ENCODE measurements at regions of chr12 and their contacts with region 1.

Region 1: GRCh38 chr12:54398995-54399793 is 14.7 kb upstream of the ZNF385A start:
- DNase-seq: peak; percentile 91

Region 2: DNA sequence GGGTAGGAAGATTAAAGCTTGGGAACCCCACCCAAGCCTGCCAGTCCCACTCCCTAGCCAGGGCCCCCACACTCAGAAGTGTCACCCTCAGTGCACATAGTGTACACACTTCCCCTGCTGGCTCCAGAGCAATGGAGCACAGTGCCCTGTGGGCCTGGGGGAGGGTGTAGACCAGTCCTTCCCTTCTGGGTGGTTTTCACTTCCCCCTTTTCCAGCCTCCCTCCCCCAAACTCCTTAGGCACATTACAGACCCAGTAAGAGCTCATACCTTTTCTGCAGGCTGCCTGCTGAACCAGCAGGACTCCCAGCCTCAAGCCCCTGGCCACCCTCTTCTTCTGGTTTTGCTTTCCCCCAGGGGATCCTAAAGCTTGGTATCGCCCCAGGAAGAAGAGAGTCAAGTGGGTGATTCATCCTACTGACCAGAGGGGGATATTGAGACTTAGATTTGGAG is 14.6 kb before region 1 on chr12 and contains the start of gene ZNF385A:
- intact Hi-C with region 1: loop called (anchors 1 kb)
- DNase-seq: no peak
- total RNA-seq, gene ZNF385A: 4.8 TPM

Region 3: DNA sequence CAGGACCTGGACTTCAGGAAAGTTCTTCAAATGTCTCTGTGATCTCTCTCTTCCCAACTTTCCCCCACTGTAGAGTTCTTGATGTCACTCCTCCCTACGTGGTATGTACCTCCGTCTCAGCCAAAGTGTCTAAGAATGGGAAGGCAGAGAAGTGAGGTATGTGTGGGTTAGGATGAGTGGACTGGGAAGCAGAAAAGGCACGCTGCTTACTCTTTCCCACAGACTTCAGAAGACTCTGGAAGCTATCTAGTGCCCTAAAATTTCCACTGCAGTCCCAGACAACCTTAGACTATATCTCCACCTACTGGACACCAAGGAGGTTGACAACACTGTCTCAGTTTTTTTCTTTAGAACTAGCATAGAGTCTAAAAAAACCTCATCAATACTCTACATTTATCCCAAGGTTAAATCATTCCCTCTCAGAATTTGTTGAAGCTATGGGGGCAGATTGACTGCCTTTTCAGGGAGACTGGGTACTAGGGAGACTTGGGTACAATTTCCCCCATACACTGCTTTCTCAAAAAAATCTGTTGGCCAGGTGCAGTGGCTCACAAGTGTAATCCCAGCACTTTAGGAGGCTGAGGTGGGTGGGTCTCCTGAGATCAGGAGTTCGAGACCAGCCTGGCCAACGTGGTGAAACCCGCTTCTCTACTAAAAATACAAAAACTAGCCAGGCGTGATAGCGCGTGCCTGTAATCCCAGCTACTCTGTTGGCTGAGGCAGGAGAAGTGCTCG is 40.5 kb after region 1 on chr12:
- intact Hi-C with region 1: loop called (anchors 1 kb)
- DNase-seq: no peak